ENCODE measurements at regions of chr9 and their contacts with region 1.

Region 1: DNA sequence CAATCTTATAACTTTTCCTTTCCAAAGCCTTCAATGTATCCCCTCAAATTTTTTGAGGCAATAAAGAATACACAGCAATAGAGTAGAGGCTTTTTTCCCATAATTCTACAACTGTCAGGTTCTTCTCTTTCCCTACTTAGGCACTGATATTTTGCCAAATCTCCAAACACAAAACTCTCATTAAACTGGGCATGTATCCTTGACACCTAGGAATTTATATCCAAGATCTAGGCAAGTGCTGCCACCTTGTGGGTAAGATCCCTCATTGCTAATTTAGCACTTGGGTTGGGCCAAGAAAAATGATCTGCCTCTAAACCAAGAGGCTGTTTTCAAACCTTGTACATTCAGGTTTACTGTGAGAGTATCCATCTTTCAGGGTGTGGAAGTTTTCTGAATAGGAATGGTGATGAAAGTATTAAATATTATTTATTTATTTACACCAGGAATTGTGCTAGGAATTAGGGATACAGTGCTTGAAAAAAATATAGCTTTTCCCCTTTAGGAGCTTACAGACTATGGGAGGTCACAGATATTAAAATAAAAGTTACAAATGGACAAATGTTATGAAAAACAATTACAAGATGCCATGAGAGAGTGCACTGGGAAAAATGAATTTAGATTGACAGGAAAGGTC is 17.6 kb downstream of the TSTD2 start:
- DNase-seq: peak; percentile 67
- H3K4me3 ChIP-seq: no peak overlapping the region
- H3K27ac ChIP-seq: no peak overlapping the region
- H3K4me1 ChIP-seq: no peaks in the 10 kb centered on the region
- H3K27me3 ChIP-seq: no peaks in the 10 kb centered on the region
- CTCF ChIP-seq: peak; percentile 66 to 82 (median 80)
- POLR2A ChIP-seq: no peak

Region 2: DNA sequence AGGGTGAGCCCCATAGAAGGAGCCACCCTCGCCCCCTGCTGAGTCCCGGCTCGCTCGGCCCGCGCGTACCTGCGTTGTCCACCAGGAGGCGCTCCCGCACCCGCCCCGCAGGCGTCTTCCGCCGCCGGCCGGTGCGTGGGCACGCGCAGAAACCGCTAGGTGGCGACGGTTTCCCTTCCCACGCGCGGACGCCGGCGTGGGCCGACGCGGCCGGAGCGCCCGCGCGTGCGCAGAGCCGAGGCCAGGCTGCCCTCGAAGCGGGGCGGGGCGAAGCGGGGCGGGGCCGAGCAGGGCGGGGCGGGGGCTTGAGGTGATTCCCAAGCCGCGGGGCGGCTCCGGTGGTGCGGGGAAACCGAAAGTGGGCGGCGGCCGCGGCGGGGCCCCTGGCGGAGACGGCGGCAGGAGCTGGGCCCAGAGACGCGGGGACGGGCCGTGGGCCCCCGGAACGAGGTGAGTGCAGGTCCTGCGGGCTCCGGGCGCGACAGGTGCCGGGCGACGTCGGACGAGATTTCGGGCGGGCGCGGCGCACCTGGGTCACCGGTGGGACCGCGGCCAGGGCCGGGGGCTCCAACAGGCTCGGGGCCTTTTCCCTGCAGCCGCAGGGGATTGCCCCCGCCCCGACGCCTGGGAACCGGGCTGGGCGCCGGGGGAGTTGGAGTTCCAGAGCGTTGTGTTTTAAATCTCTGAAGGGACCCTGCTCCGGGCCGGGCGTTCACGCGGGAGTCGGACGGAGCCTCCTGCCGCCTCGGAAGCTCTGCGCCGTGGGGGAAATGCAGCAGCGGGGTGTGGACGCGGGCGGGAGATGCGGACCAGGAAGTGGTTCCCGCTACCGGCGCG is 203.5 kb before region 1 on chr9 and contains the start of gene TDRD7:
- intact Hi-C with region 1: loop called (anchors 5 kb)
- DNase-seq: peak; percentile 75
- H3K4me3 ChIP-seq: peak within 1 kb of the TSS; percentile 90 to 97
- H3K27ac ChIP-seq: peak within 1 kb of the TSS; percentile 82 to 83
- H3K4me1 ChIP-seq: peaks cover 6% of the 10 kb centered on the region
- H3K27me3 ChIP-seq: no peaks in the 10 kb centered on the region
- CTCF ChIP-seq: peak; percentile 97 to 99 (median 98)
- POLR2A ChIP-seq: peak; percentile 42
- total RNA-seq, gene TDRD7: 9.3 to 18.0 TPM

Measured in prostate gland (tissue), 2 donors.